ENCODE measurements at regions of chr3 and their contacts with region 1.

Region 1: GRCh38 chr3:171829841-171830517 is 13.2 kb upstream of the TMEM212 start:
- DNase-seq: peak; percentile 68 to 80
- ATAC-seq: peak; percentile 97
- H3K4me3 ChIP-seq: no peak overlapping the region
- H3K27ac ChIP-seq: peak overlapping the region; percentile 73 to 81
- H3K4me1 ChIP-seq: peaks cover 62% of the 10 kb centered on the region
- CTCF ChIP-seq: peak; percentile 63
- EP300 ChIP-seq: no peak
- POLR2A ChIP-seq: no peak
- RAD21 ChIP-seq: peak; percentile 84 to 85

Region 2: GRCh38 chr3:171646357-171647133 is 183.4 kb before region 1 on chr3:
- CTCF ChIA-PET with region 1: interaction called, 20 read pairs
- POLR2A ChIA-PET with region 1: no interaction called
- DNase-seq: peak; percentile 30 to 45
- ATAC-seq: peak in 1 of 2 experiments; percentile 70; a peak in 2 of 6 replicates
- H3K4me3 ChIP-seq: no peak overlapping the region
- H3K27ac ChIP-seq: peak overlapping the region; percentile 16 to 49; a peak in 2 of 6 replicates
- H3K4me1 ChIP-seq: peaks cover 6% of the 10 kb centered on the region; the same call in 1 of the 3 replicates
- CTCF ChIP-seq: peak; percentile 56
- EP300 ChIP-seq: no peak
- POLR2A ChIP-seq: no peak
- RAD21 ChIP-seq: peak; percentile 69 to 73

Region 3: GRCh38 chr3:171791695-171792082 is 38.3 kb before region 1 on chr3:
- CTCF ChIA-PET with region 1: interaction called, 11 read pairs
- POLR2A ChIA-PET with region 1: no interaction called
- DNase-seq: no peak
- ATAC-seq: peak in 1 of 2 experiments; percentile 41; a peak in 2 of 6 replicates
- H3K4me3 ChIP-seq: no peak overlapping the region
- H3K27ac ChIP-seq: peak overlapping the region; percentile 34 to 55; a peak in 5 of 6 replicates
- H3K4me1 ChIP-seq: peaks cover 27% of the 10 kb centered on the region
- CTCF ChIP-seq: no peak
- EP300 ChIP-seq: no peak
- POLR2A ChIP-seq: no peak
- RAD21 ChIP-seq: no peak

Region 4: GRCh38 chr3:171809821-171810628 is 20.0 kb before region 1 on chr3 and contains the start of gene PLD1:
- CTCF ChIA-PET with region 1: interaction called, 11 read pairs
- POLR2A ChIA-PET with region 1: interaction called, 10 read pairs
- DNase-seq: peak; percentile 79 to 83
- ATAC-seq: peak; percentile 80 to 87
- H3K4me3 ChIP-seq: peak within 1 kb of the TSS; percentile 73
- H3K27ac ChIP-seq: peak within 1 kb of the TSS; percentile 94 to 95
- H3K4me1 ChIP-seq: peaks cover 56% of the 10 kb centered on the region
- CTCF ChIP-seq: no peak
- EP300 ChIP-seq: no peak
- POLR2A ChIP-seq: peak; percentile 25
- RAD21 ChIP-seq: no peak
- polyA plus RNA-seq, gene PLD1: 26.6 and 27.2 TPM in 2 replicates